Posterior vena cava (tissue), 2 donors: ENCODE measurements at regions of chr16 and their contacts with region 1.

Region 1: DNA sequence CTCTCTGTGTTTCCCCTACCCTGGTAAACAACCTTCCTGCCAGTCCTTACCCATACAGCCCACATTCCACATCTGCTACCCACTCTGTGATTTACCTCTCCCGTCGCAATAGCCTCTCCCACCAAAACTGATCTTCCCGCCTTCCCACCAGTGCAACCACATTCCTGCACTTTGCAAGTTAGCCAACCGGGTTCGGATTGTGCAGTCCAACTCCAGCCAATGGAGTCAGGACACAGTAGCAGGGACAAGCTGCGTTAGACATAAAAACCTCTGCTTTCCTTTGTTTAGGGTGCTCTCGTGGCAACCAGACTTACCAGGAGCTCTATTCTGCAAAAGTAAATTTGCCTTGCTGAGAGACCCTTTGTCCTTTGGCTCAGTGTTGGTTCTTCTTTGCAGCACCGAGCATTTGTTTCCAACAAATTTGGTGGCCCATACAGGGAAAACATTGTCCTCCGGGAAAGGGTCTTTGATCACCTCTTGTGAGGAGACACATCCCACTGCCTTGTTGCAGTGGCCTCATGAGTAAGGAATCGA is 1.4 kb downstream of the HPR start:
- DNase-seq: no peak

Region 2: GRCh38 chr16:72025759-72026114 is 38.7 kb before region 1 on chr16:
- intact Hi-C with region 1: no loop called
- DNase-seq: no peak

Region 3: DNA sequence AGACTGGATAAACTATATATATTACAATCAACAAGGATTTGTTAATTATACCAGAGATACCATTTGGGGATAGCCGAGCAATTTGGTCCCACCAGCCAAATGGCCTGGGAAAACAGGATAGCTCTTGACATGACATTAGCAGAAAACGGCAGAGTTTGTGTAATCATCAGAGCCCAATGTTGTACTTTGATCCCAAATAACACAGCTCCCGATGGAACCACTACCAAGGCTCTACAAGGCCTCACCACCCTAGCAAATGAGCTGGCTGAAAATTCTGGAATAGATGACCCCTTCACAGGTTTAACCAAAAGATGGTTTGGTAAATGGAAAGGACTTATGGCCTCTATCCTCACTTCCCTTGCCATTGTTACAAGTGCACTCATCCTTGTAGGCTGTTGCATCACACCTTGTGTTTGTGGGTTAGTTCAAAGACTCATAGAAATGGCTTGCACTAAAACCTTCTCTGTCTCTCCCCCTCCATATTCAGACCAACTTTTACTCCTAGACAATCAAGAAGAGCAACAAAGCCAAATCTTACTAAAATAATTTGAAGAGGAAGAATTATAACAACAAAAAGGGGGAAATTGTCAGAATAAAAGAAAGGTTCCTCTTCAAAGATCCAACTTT is 19.5 kb after region 1 on chr16:
- intact Hi-C with region 1: loop called in 1 of 2 experiments (anchors 2 kb)
- DNase-seq: no peak

Region 4: DNA sequence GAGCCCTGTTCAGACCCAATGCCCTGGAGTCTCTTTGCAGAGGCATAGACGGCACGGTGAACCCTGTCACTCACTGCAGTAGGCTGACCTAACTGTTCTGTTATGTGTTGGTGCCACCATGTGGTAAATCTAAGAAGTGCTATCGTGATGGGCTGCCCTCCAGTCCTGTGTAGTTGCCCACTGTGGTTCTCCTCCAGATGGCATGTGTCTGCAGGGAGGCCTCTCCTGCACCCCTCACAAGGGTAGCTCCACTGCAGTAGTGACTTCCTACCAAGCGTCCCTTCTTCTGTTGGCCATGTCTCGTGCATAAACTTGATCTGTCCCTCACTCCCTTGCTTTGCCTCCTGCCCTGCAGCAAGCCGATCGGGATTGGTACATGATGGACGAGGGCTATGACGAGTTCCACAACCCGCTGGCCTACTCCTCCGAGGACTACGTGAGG is 35.0 kb after region 1 on chr16:
- intact Hi-C with region 1: loop called in 1 of 2 experiments (anchors 1 kb)
- DNase-seq: no peak